MCF 10A (cell line): ENCODE measurements at regions of chr18 and their contacts with region 1.

Region 1: DNA sequence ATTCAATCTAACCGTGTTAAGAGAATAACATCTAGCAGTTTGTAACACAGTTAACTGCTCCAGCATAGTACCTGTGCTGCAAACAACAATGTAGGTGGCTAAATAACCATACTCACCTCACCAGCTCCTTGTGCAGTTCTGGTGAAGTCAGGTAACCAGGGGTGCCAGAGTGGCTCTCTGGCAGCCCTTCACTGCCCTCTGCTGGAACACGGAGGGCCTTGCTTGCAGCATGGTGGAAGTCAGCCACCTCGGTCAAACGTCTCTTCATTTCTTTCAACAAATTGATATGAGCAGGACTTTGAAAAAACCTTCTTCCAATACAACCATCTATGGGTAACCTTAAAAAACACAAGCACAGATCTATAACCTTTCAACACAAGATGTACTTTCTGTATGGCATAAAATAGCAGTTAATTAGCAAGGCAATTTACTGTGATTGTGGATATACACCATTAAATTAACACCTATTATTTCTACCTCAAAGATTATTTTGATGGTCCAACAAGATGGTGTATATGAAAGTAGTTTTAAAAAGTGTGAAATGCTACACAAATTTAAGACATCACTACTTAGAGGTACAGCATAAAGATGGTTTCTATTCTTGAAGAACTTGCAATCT is 56.6 kb downstream of the EPG5 start:
- DNase-seq: peak; percentile 61
- H3K4me3 Mint-ChIP-seq: no peak overlapping the region
- H3K27ac Mint-ChIP-seq: no peak overlapping the region
- H3K4me1 Mint-ChIP-seq: no peaks in the 10 kb centered on the region
- H3K27me3 Mint-ChIP-seq: no peaks in the 10 kb centered on the region
- CTCF ChIP-seq: peak; percentile 74

Region 2: DNA sequence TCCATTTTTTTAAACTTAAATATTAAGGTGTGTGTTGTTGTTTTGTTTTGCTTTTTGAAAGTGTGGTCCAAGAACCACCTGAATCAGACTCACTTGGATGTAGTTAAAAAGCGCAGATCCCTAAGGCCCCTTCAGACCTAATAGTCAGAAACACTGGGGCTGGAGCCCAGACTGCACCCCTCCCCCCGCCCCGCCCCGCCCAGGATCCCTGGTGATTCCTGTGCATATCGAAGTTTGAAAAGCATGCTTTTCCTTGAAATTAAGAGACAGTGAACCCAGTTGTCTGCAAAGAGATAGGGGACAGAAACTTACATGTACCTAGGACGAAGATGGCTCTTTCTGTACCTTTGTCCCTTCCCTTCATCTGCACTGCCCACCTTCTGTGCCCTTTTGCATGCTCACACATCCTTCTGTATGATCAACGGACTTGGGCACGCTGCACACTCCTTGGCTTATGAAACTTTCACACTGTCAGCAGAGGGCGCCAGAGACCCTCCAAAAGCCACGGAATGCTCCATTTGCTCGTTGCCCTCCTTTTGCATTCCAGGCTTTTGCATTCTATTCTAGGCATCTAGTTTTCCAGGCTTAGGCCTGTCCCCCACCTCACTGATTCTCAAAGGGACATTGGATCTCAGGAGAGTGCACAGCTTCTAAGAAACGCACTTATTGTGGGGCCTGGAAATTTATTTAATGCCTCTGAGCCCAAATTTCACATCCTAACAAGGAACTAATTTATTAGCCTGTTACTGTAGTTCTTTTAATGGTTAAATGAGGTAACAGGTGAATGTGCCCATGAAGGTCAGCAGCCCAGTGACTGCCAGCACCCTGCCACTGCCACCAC is 219.3 kb before region 1 on chr18:
- CTCF ChIA-PET with region 1: interaction called, 5 read pairs
- POLR2A ChIA-PET with region 1: no interaction called
- intact Hi-C with region 1: loop called (anchors 1 kb)
- DNase-seq: peak; percentile 86
- H3K4me3 Mint-ChIP-seq: no peak overlapping the region
- H3K27ac Mint-ChIP-seq: no peak overlapping the region
- H3K4me1 Mint-ChIP-seq: peaks cover 10% of the 10 kb centered on the region
- H3K27me3 Mint-ChIP-seq: peaks cover 11% of the 10 kb centered on the region
- CTCF ChIP-seq: peak; percentile 90